CD8-positive, alpha-beta T cell (primary cell): ENCODE measurements at regions of chr1 and their contacts with region 1.

Region 1: GRCh38 chr1:184044603-184045376 is 6.7 kb upstream of the TSEN15 start:
- DNase-seq: no peak
- ATAC-seq: no peak
- H3K4me3 ChIP-seq: no peak overlapping the region
- H3K4me3 Mint-ChIP-seq: no peak overlapping the region
- H3K27ac ChIP-seq: no peak overlapping the region
- H3K27ac Mint-ChIP-seq: no peak overlapping the region
- H3K4me1 ChIP-seq: no peaks in the 10 kb centered on the region
- H3K4me1 Mint-ChIP-seq: no peaks in the 10 kb centered on the region
- H3K27me3 ChIP-seq: no peaks in the 10 kb centered on the region
- H3K27me3 Mint-ChIP-seq: peaks cover 47% of the 10 kb centered on the region
- CTCF ChIP-seq: no peak

Region 2: DNA sequence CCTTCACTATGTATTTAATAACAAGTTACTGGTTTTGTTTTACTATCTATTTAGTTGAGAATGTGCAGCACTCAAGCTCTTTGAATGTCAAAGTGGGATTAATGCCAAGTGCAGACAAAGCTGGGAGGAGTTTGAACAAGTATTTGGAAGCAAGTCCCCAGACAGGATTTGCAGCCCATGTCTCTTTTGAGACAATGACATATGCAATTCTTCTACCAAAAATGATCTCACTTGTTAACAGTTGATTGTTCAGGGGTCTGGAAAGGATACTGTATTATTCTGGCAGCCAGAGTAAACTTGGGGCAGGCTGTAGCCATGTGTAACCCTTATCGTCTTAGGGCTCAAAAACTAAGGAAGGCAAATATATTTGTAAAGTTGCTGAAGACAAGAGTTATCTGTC is 23.1 kb before region 1 on chr1:
- CTCF ChIA-PET with region 1: no interaction called
- POLR2A ChIA-PET with region 1: no interaction called
- intact Hi-C with region 1: loop called in 1 of 2 experiments (anchors 2 kb)
- DNase-seq: no peak
- ATAC-seq: no peak
- H3K4me3 ChIP-seq: no peak overlapping the region
- H3K4me3 Mint-ChIP-seq: no peak overlapping the region
- H3K27ac ChIP-seq: no peak overlapping the region
- H3K27ac Mint-ChIP-seq: no peak overlapping the region
- H3K4me1 ChIP-seq: no peaks in the 10 kb centered on the region
- H3K4me1 Mint-ChIP-seq: no peaks in the 10 kb centered on the region
- H3K27me3 ChIP-seq: no peaks in the 10 kb centered on the region
- H3K27me3 Mint-ChIP-seq: peaks cover 11% of the 10 kb centered on the region
- CTCF ChIP-seq: no peak

Region 3: GRCh38 chr1:184127520-184127919 is 82.7 kb after region 1 on chr1:
- CTCF ChIA-PET with region 1: no interaction called
- POLR2A ChIA-PET with region 1: no interaction called
- intact Hi-C with region 1: no loop called
- DNase-seq: no peak
- ATAC-seq: no peak
- H3K4me3 ChIP-seq: no peak overlapping the region
- H3K4me3 Mint-ChIP-seq: no peak overlapping the region
- H3K27ac ChIP-seq: no peak overlapping the region
- H3K27ac Mint-ChIP-seq: no peak overlapping the region
- H3K4me1 ChIP-seq: no peaks in the 10 kb centered on the region
- H3K4me1 Mint-ChIP-seq: no peaks in the 10 kb centered on the region
- H3K27me3 ChIP-seq: no peaks in the 10 kb centered on the region
- H3K27me3 Mint-ChIP-seq: no peaks in the 10 kb centered on the region
- CTCF ChIP-seq: no peak